PC-9 (cell line): ENCODE measurements at regions of chr3 and their contacts with region 1.

Region 1: GRCh38 chr3:9792405-9793160 is at the starts of genes ARPC4 and TADA3:
- DNase-seq: peak; percentile 79 to 86
- H3K4me3 ChIP-seq: peak within 1 kb of the TSS; percentile 84
- H3K27ac ChIP-seq: peak within 1 kb of the TSS; percentile 89
- H3K4me1 ChIP-seq: peaks cover 16% of the 10 kb centered on the region
- H3K27me3 ChIP-seq: no peaks in the 10 kb centered on the region
- CTCF ChIP-seq: no peak
- total RNA-seq, gene ARPC4: 114 and 127 TPM in 2 replicates
- total RNA-seq, gene TADA3: 72.4 and 99.1 TPM in 2 replicates

Region 2: DNA sequence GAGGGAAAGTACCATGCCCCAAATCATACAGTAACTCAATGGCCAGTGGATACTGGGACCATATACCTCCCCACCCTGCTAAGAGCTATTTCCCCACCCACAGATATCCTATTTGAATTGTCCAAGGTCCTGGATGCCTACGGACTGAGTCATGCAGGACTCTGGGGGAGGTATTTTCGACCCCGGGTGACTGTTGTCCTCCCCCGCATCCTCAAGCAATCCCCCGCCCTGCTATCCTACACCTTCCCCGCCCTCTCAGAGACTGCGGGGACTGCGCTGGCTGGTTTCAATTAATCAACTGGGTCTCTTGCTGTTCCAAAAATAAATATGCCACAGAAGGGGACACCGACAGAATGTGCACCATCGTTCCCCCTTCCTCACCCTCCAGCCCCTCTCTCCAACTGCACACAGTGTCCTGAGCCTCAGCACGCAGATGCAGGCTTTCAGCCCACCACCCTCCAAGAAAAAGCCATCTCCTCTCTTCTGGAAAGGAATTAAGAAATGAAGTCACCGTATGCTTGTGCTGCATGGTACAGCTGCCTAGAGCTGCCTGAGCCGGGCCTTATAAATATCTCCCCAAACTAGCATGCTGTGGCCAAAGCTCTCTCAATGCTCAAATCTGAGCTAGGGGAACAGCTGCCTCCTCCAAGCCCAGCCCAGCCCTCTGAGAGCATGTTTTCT is 1050.9 kb before region 1 on chr3:
- CTCF ChIA-PET with region 1: no interaction called
- POLR2A ChIA-PET with region 1: no interaction called
- intact Hi-C with region 1: no loop called
- DNase-seq: peak; percentile 80 to 82
- H3K4me3 ChIP-seq: no peak overlapping the region
- H3K27ac ChIP-seq: peak overlapping the region; percentile 67
- H3K4me1 ChIP-seq: peaks cover 60% of the 10 kb centered on the region
- H3K27me3 ChIP-seq: no peaks in the 10 kb centered on the region
- CTCF ChIP-seq: no peak

Region 3: DNA sequence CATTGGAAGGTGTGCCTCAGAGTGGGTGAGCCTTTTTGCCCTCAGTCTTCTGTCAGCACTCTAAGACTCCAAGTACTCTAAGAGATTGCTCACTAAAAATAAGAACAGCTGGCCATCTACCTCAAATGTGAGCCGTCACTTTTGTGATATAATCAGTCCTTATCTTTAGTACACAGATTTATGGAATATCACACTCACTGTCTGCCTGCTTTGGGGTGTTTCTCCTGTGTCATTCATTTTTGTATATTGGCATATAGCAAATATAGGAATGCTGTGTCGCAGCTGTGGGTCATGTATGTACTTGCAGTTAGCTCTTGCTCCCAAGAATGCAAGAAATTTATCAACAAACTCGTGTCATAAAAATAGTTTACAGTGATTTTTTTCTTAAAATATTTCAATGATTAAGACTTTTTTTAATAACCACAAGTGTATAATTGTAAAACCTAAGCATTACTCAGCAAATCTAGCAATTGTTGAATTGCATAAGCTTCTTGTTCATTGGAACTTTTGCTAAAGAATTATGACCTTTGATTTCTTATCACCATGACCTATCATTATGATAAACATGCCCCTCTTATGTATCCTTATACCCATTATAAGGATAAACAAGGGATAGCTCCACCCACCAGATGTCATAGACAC is 376.3 kb before region 1 on chr3:
- CTCF ChIA-PET with region 1: interaction called, 11 read pairs
- POLR2A ChIA-PET with region 1: no interaction called
- intact Hi-C with region 1: no loop called
- DNase-seq: no peak
- H3K4me3 ChIP-seq: no peak overlapping the region
- H3K27ac ChIP-seq: peak overlapping the region; percentile 62
- H3K4me1 ChIP-seq: peaks cover 49% of the 10 kb centered on the region
- H3K27me3 ChIP-seq: no peaks in the 10 kb centered on the region
- CTCF ChIP-seq: no peak

Region 4: GRCh38 chr3:9731206-9732079 is 61.1 kb before region 1 on chr3 and contains the start of gene BRPF1:
- CTCF ChIA-PET with region 1: no interaction called
- POLR2A ChIA-PET with region 1: no interaction called
- intact Hi-C with region 1: loop called (anchors 5 kb)
- DNase-seq: peak; percentile 91 to 98
- H3K4me3 ChIP-seq: peak within 1 kb of the TSS; percentile 95
- H3K27ac ChIP-seq: peak within 1 kb of the TSS; percentile 73
- H3K4me1 ChIP-seq: peaks cover 19% of the 10 kb centered on the region
- H3K27me3 ChIP-seq: no peaks in the 10 kb centered on the region
- CTCF ChIP-seq: 0 out of 2 replicates have a peak, but pooled peaks have one; percentile 13
- total RNA-seq, gene BRPF1: 15.9 and 18.3 TPM in 2 replicates

Region 5: GRCh38 chr3:9749645-9750555 is 42.7 kb before region 1 on chr3 and contains the start of gene OGG1:
- CTCF ChIA-PET with region 1: no interaction called
- POLR2A ChIA-PET with region 1: no interaction called
- intact Hi-C with region 1: loop called (anchors 2 kb)
- DNase-seq: peak; percentile 92 to 96
- H3K4me3 ChIP-seq: peak within 1 kb of the TSS; percentile 59
- H3K27ac ChIP-seq: no peak within 1 kb of the TSS; the same call in 1 of the 2 replicates
- H3K4me1 ChIP-seq: peaks cover 14% of the 10 kb centered on the region
- H3K27me3 ChIP-seq: no peaks in the 10 kb centered on the region
- CTCF ChIP-seq: no peak
- total RNA-seq, gene OGG1: 22.1 and 24.3 TPM in 2 replicates

Region 6: GRCh38 chr3:9769426-9770275 is 22.9 kb before region 1 on chr3 and contains the start of gene CAMK1:
- CTCF ChIA-PET with region 1: no interaction called
- POLR2A ChIA-PET with region 1: interaction called, 13 read pairs
- intact Hi-C with region 1: no loop called
- DNase-seq: peak in 1 of 2 experiments; percentile 59
- H3K4me3 ChIP-seq: peak within 1 kb of the TSS; percentile 49; the same call in 1 of the 2 replicates
- H3K27ac ChIP-seq: no peak within 1 kb of the TSS
- H3K4me1 ChIP-seq: no peaks in the 10 kb centered on the region
- H3K27me3 ChIP-seq: peaks cover 7% of the 10 kb centered on the region; the same call in 1 of the 2 replicates
- CTCF ChIP-seq: no peak
- total RNA-seq, gene CAMK1: 2.0 and 3.1 TPM in 2 replicates